HCT116 (cell line): ENCODE measurements at regions of chr7 and their contacts with region 1.

Region 1: GRCh38 chr7:12623897-12624498 is 53.5 kb downstream of the SCIN start:
- DNase-seq: peak; percentile 13
- ATAC-seq: peak; percentile 58
- H3K4me3 ChIP-seq: 0 out of 4 replicates have a peak overlapping the region, but pooled peaks of 1 of the 2 experiments have one; percentile 19
- H3K27ac ChIP-seq: no peak overlapping the region
- H3K4me1 ChIP-seq: no peaks in the 10 kb centered on the region
- H3K27me3 ChIP-seq: no peaks in the 10 kb centered on the region
- CTCF ChIP-seq: peak; percentile 64 to 86 (median 81)
- POLR2A ChIP-seq: no peak
- RAD21 ChIP-seq: peak; percentile 82

Region 2: GRCh38 chr7:11427686-11428273 is 1196.2 kb before region 1 on chr7:
- CTCF ChIA-PET with region 1: no interaction called
- POLR2A ChIA-PET with region 1: no interaction called
- RAD21 ChIA-PET with region 1: no interaction called
- intact Hi-C with region 1: loop called (anchors 5 kb)
- DNase-seq: peak; percentile 53
- ATAC-seq: peak; percentile 73
- H3K4me3 ChIP-seq: no peak overlapping the region
- H3K27ac ChIP-seq: no peak overlapping the region
- H3K4me1 ChIP-seq: no peaks in the 10 kb centered on the region
- H3K27me3 ChIP-seq: no peaks in the 10 kb centered on the region
- CTCF ChIP-seq: peak; percentile 57 to 78 (median 71)
- POLR2A ChIP-seq: no peak
- RAD21 ChIP-seq: peak; percentile 82

Region 3: DNA sequence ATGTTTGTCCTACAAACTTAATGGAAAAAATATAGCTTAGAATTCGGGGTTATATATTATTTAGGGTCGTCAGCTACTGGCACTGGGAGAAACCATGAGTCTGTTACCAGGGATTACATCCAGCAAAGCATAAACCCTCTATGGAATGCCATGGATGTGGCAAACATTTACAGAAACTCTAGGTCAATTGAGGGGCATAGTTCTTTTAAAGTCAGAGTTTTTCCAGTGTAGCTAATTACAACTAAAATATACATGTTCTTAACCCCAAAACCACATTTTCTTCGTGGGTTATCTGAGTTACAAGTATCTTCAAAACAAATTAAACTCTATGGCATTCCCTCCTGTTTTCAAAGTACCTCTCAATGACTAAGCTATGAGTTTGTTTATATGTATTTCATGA is 692.7 kb before region 1 on chr7:
- CTCF ChIA-PET with region 1: no interaction called
- POLR2A ChIA-PET with region 1: no interaction called
- RAD21 ChIA-PET with region 1: no interaction called
- intact Hi-C with region 1: no loop called
- DNase-seq: no peak
- ATAC-seq: no peak
- H3K4me3 ChIP-seq: no peak overlapping the region
- H3K27ac ChIP-seq: no peak overlapping the region
- H3K4me1 ChIP-seq: no peaks in the 10 kb centered on the region
- H3K27me3 ChIP-seq: no peaks in the 10 kb centered on the region
- CTCF ChIP-seq: no peak
- POLR2A ChIP-seq: no peak
- RAD21 ChIP-seq: no peak

Region 4: DNA sequence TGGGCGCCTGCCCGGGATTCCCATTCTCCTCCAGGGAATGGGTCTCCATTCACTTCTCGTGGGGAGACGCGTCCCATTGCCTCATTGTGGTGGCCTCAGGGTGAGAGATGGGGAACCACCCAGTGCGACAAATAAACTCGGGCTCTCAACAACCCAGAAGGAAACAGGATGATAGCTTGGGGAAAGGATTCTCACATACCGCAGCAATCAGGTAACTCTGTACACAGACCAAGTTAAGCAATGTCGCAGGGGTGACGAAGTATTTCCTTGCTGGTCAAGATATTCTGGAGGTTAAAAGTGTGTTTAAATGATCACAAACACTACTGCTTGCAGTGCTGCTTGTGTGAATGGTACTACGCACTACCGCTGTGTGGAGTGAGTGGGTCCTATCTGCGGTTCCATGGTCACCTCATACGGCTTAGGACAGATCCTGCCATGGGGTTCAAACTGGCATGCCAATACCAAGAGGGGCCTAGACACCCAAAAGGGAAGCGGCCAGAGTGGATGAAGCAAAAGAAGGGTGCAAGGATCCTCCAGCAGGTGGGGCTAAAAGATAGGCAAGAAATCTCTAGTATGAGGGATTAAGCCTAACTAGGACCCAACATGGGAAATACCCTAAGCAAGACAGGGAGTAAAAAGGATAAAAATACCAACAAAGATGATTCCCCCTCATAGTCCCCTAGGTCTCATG is 556.7 kb before region 1 on chr7:
- CTCF ChIA-PET with region 1: no interaction called
- POLR2A ChIA-PET with region 1: no interaction called
- RAD21 ChIA-PET with region 1: no interaction called
- intact Hi-C with region 1: loop called (anchors 5 kb)
- DNase-seq: peak; percentile 58
- ATAC-seq: peak; percentile 71
- H3K4me3 ChIP-seq: peak overlapping the region in 1 of 2 experiments; percentile 20; a peak in 1 of 4 replicates
- H3K27ac ChIP-seq: no peak overlapping the region
- H3K4me1 ChIP-seq: peaks cover 0 to 31% of the 10 kb centered on the region in 2 experiments; a peak in 2 of 4 replicates
- H3K27me3 ChIP-seq: no peaks in the 10 kb centered on the region
- CTCF ChIP-seq: peak; percentile 65 to 74 (median 68)
- POLR2A ChIP-seq: no peak
- RAD21 ChIP-seq: peak; percentile 89

Region 5: GRCh38 chr7:12524794-12525386 is 99.1 kb before region 1 on chr7:
- CTCF ChIA-PET with region 1: interaction called, 35 read pairs
- POLR2A ChIA-PET with region 1: no interaction called
- RAD21 ChIA-PET with region 1: interaction called, 4 to 7 read pairs
- intact Hi-C with region 1: loop called (anchors 1 kb)
- DNase-seq: peak; percentile 60
- ATAC-seq: peak; percentile 61
- H3K4me3 ChIP-seq: no peak overlapping the region
- H3K27ac ChIP-seq: no peak overlapping the region
- H3K4me1 ChIP-seq: peaks cover 0 to 4% of the 10 kb centered on the region in 2 experiments; a peak in 1 of 4 replicates
- H3K27me3 ChIP-seq: no peaks in the 10 kb centered on the region
- CTCF ChIP-seq: peak; percentile 38 to 73 (median 63); a peak in 5 of 6 replicates
- POLR2A ChIP-seq: no peak
- RAD21 ChIP-seq: peak; percentile 81

Region 6: GRCh38 chr7:12788591-12788990 is 164.6 kb after region 1 on chr7:
- CTCF ChIA-PET with region 1: no interaction called
- POLR2A ChIA-PET with region 1: no interaction called
- RAD21 ChIA-PET with region 1: no interaction called
- intact Hi-C with region 1: no loop called
- DNase-seq: no peak
- ATAC-seq: no peak
- H3K4me3 ChIP-seq: no peak overlapping the region
- H3K27ac ChIP-seq: no peak overlapping the region
- H3K4me1 ChIP-seq: no peaks in the 10 kb centered on the region
- H3K27me3 ChIP-seq: no peaks in the 10 kb centered on the region
- CTCF ChIP-seq: no peak
- POLR2A ChIP-seq: no peak
- RAD21 ChIP-seq: no peak

Region 7: GRCh38 chr7:13262929-13263530 is 639.0 kb after region 1 on chr7:
- CTCF ChIA-PET with region 1: no interaction called
- POLR2A ChIA-PET with region 1: no interaction called
- RAD21 ChIA-PET with region 1: no interaction called
- intact Hi-C with region 1: loop called (anchors 5 kb)
- DNase-seq: peak; percentile 26
- ATAC-seq: peak; percentile 71; the same call in 1 of the 2 replicates
- H3K4me3 ChIP-seq: no peak overlapping the region
- H3K27ac ChIP-seq: no peak overlapping the region
- H3K4me1 ChIP-seq: no peaks in the 10 kb centered on the region
- H3K27me3 ChIP-seq: no peaks in the 10 kb centered on the region
- CTCF ChIP-seq: peak; percentile 46 to 90 (median 71)
- POLR2A ChIP-seq: no peak
- RAD21 ChIP-seq: peak; percentile 91